Pancreas (tissue), 10 donors: ENCODE measurements at regions of chr15 and their contacts with region 1.

Region 1: GRCh38 chr15:29337156-29337959 is 67.7 kb upstream of the NSMCE3 start:
- DNase-seq: peak in 3 of 6 donors; percentile 26 to 48 (median 39)
- ATAC-seq: peak; percentile 67 to 93 (median 79)
- H3K4me3 ChIP-seq: no peak overlapping the region
- H3K27ac ChIP-seq: no peak overlapping the region
- H3K4me1 ChIP-seq: peaks cover 0 to 4% (median 0%) of the 10 kb centered on the region in 3 donors
- H3K27me3 ChIP-seq: no peaks in the 10 kb centered on the region
- CTCF ChIP-seq: no peak

Region 2: DNA sequence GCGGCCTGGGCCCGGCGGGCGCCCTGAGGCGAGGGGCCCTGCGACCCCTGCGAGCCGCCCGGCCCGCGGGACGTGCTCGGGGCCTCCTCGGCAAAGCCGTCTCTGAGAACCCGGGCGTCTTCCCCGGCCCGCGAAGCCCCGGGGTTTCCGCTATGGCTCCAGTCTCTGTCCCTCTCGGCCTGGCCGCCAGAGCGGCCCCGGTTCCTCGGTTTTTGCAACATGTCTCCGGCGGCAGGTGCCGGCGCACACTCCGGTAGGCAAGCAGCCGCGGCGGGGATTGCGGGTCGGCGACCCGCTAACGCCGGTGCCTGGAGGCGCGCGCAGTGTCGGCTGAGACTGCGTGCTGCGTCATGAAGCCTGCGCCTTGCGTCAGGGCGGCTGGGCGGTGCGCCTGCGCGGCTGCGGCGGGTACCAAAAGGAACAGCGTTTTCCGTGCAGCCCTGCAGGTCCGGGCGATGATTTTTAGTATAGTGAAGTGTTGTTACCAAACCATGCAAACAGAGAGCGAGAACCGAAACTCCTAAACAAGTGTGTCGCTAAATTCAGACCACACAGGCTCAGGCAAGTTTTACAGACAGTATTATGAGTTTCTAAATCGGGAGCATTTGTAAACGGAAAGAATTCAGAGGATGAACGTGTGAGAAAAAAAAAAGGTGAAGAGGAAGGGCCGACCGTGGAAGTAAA is 67.7 kb before region 1 on chr15 and contains the start of gene NSMCE3:
- intact Hi-C with region 1: loop called in 1 of 3 experiments (anchors 10 kb)
- DNase-seq: peak; percentile 84 to 96 (median 88)
- ATAC-seq: peak; percentile 98 to 100 (median 99)
- H3K4me3 ChIP-seq: peak within 1 kb of the TSS; percentile 70 to 98 (median 84)
- H3K27ac ChIP-seq: peak within 1 kb of the TSS; percentile 66 to 90 (median 80)
- H3K4me1 ChIP-seq: peaks cover 15 to 27% (median 24%) of the 10 kb centered on the region in 3 donors
- H3K27me3 ChIP-seq: no peaks in the 10 kb centered on the region
- CTCF ChIP-seq: no peak
- total RNA-seq, gene NSMCE3: 1.5 to 3.3 (median 1.9) TPM

Region 3: DNA sequence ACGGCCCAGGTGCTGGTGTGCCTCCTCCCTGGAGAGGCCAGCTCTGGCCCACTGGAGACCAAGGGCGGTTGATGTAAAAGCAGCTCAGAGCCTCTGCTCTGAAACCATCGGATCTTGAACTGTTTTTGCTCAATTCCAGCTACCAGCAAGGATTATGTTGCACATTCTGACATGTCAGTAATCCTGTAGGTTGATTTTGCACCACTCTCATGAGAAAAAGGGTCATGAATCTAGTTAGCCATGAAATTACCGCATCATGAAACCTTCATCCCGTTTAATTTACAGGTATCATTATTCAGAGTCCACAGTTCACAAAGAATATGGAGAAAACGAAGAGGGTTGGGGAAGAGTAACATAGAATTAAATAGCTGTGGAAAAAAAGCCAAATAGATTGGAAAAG is 52.7 kb after region 1 on chr15:
- intact Hi-C with region 1: loop called in 1 of 3 experiments (anchors 10 kb)
- DNase-seq: no peak
- ATAC-seq: no peak
- H3K4me3 ChIP-seq: no peak overlapping the region
- H3K27ac ChIP-seq: no peak overlapping the region
- H3K4me1 ChIP-seq: no peaks in the 10 kb centered on the region
- H3K27me3 ChIP-seq: no peaks in the 10 kb centered on the region
- CTCF ChIP-seq: no peak

Region 4: GRCh38 chr15:29410338-29410737 is 73.0 kb after region 1 on chr15:
- intact Hi-C with region 1: no loop called
- DNase-seq: no peak
- ATAC-seq: no peak
- H3K4me3 ChIP-seq: no peak overlapping the region
- H3K27ac ChIP-seq: no peak overlapping the region
- H3K4me1 ChIP-seq: no peaks in the 10 kb centered on the region
- H3K27me3 ChIP-seq: peaks cover 0 to 6% (median 0%) of the 10 kb centered on the region in 4 donors
- CTCF ChIP-seq: no peak